Activated CD4-positive, alpha-beta T cell treated with anti-CD3 and anti-CD28 coated beads, Interleukin-2, amount 10 ng/mL, durations not matched to agents 24 days and 14 days (primary cell): ENCODE measurements at regions of chr13 and their contacts with region 1.

Region 1: DNA sequence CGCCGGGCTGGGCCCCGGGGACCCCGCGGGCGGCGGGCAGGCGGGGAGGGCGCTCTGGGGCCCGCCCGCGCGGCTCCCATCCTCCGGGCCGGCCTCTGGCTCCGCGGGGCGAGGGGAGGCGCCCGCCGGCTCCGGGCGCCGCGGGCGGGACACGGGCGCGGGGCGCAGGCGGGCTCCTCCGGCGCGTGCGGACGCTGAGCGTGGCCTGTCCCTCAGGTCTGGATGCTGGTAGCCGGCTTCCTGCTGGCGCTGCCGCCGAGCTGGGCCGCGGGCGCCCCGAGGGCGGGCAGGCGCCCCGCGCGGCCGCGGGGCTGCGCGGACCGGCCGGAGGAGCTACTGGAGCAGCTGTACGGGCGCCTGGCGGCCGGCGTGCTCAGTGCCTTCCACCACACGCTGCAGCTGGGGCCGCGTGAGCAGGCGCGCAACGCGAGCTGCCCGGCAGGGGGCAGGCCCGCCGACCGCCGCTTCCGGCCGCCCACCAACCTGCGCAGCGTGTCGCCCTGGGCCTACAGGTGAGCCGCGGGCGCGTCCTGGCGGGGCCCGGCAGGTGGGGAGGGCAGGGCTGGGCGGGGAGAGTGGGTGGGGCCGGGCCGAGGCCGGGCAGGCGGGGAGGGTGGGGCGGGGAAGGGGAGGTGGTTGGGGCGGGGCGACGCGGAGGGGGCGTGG is 414 bp downstream of the IL17D start:
- DNase-seq: peak; percentile 92
- H3K4me3 Mint-ChIP-seq: no peak overlapping the region
- H3K27ac Mint-ChIP-seq: no peak overlapping the region
- H3K4me1 Mint-ChIP-seq: peaks cover 10% of the 10 kb centered on the region
- H3K27me3 Mint-ChIP-seq: peaks cover 41% of the 10 kb centered on the region

Region 2: DNA sequence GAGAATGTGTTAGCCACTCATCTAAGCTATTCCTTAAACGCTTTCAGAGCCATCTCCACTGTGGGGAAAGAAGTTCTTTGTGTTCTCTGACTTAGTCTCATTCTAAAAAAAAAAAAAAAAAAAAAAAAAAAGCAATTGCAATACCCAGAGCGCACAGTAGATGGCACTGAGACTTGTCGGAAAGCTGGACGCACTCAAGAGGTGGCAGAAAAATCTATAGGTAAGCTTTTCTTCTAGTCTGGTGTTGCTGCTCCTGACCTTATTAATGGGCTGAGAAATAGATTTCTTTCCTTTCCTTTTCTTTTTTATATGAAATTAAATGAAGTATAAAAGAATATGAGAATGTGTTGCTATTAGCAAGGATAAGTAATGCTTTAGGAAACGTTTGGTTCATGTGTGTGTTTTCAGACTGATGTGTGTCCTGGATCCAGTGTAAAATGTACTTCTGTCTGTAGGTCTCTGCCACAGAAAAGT is 506.5 kb before region 1 on chr13:
- intact Hi-C with region 1: loop called (anchors 5 kb)
- DNase-seq: peak; percentile 71
- H3K4me3 Mint-ChIP-seq: no peak overlapping the region
- H3K27ac Mint-ChIP-seq: no peak overlapping the region
- H3K4me1 Mint-ChIP-seq: peaks cover 25% of the 10 kb centered on the region
- H3K27me3 Mint-ChIP-seq: peaks cover 49% of the 10 kb centered on the region

Region 3: GRCh38 chr13:20451397-20451796 is 252.5 kb before region 1 on chr13:
- intact Hi-C with region 1: no loop called
- DNase-seq: peak; percentile 36
- H3K4me3 Mint-ChIP-seq: no peak overlapping the region
- H3K27ac Mint-ChIP-seq: no peak overlapping the region
- H3K4me1 Mint-ChIP-seq: peaks cover 8% of the 10 kb centered on the region
- H3K27me3 Mint-ChIP-seq: peaks cover 4% of the 10 kb centered on the region

Region 4: DNA sequence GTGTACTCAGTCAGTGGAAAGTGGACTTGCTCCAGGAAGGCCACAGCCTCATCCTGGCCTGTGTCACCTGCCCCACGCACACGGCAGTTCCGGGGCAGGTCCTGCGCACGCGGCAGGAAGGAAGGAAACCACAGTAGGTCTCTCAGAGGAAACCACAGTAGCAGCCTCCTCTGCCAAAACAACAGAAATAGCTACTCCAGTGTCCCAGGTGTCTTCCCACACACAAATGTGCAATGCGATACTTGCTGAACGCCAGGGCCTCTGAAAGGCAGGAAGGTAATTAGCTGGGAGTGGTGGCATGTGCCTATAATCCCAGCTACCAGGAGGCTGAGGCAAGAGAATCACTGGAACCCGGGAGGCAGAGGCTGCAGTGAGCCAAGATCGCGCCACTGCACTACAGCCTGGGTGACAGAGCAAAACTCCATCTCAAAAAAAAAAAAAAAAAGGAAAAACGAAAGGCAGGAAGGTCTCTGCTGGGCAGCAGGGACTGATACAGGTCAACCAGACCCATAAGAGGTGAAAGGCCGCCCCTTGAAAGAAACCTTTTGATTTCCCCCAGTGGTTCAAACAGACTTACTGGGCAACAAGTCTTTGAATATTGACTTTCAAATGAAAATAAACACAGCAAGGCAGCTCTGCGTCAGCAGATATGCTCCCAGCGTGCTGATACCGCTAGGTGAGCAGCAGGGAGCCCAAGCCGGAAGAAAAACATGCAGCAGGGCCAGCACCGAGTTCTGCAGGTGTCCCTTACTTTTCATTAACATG is 227.8 kb before region 1 on chr13:
- intact Hi-C with region 1: no loop called
- DNase-seq: peak; percentile 90
- H3K4me3 Mint-ChIP-seq: peak overlapping the region; percentile 74
- H3K27ac Mint-ChIP-seq: peak overlapping the region; percentile 86
- H3K4me1 Mint-ChIP-seq: peaks cover 42% of the 10 kb centered on the region
- H3K27me3 Mint-ChIP-seq: peaks cover 1% of the 10 kb centered on the region

Region 5: GRCh38 chr13:20525690-20526544 is 178.0 kb before region 1 on chr13 and contains the start of gene CRYL1:
- intact Hi-C with region 1: loop called (anchors 5 kb)
- DNase-seq: peak; percentile 92
- H3K4me3 Mint-ChIP-seq: peak within 1 kb of the TSS; percentile 79
- H3K27ac Mint-ChIP-seq: peak within 1 kb of the TSS; percentile 79
- H3K4me1 Mint-ChIP-seq: peaks cover 19% of the 10 kb centered on the region
- H3K27me3 Mint-ChIP-seq: no peaks in the 10 kb centered on the region
- total RNA-seq, gene CRYL1: 5.8 and 7.1 TPM in 2 replicates

Region 6: GRCh38 chr13:20721454-20722357 is 17.8 kb after region 1 on chr13:
- intact Hi-C with region 1: no loop called
- DNase-seq: no peak
- H3K4me3 Mint-ChIP-seq: peak overlapping the region; percentile 69
- H3K27ac Mint-ChIP-seq: no peak overlapping the region
- H3K4me1 Mint-ChIP-seq: peaks cover 3% of the 10 kb centered on the region
- H3K27me3 Mint-ChIP-seq: peaks cover 15% of the 10 kb centered on the region

Region 7: GRCh38 chr13:20773194-20774080 is 69.5 kb after region 1 on chr13 and contains the start of gene EEF1AKMT1:
- intact Hi-C with region 1: loop called (anchors 1 kb)
- DNase-seq: peak; percentile 99
- H3K4me3 Mint-ChIP-seq: peak within 1 kb of the TSS; percentile 87
- H3K27ac Mint-ChIP-seq: peak within 1 kb of the TSS; percentile 98
- H3K4me1 Mint-ChIP-seq: peaks cover 26% of the 10 kb centered on the region
- H3K27me3 Mint-ChIP-seq: no peaks in the 10 kb centered on the region
- total RNA-seq, gene EEF1AKMT1: 12.0 and 14.6 TPM in 2 replicates